ENCODE measurements at regions of chr1 and their contacts with region 1.

Region 1: GRCh38 chr1:228131766-228132165 is 8.3 kb upstream of the GUK1 start:
- DNase-seq: peak; percentile 52
- H3K4me3 Mint-ChIP-seq: peak overlapping the region; percentile 79
- H3K27ac Mint-ChIP-seq: peak overlapping the region; percentile 80
- H3K4me1 Mint-ChIP-seq: peaks cover 17% of the 10 kb centered on the region
- H3K27me3 Mint-ChIP-seq: no peaks in the 10 kb centered on the region
- CTCF ChIP-seq: no peak

Region 2: GRCh38 chr1:228031276-228031995 is 100.3 kb before region 1 on chr1:
- CTCF ChIA-PET with region 1: no interaction called
- intact Hi-C with region 1: no loop called
- DNase-seq: no peak
- H3K4me3 Mint-ChIP-seq: no peak overlapping the region
- H3K27ac Mint-ChIP-seq: no peak overlapping the region
- H3K4me1 Mint-ChIP-seq: no peaks in the 10 kb centered on the region
- H3K27me3 Mint-ChIP-seq: peaks cover 54% of the 10 kb centered on the region
- CTCF ChIP-seq: no peak

Region 3: GRCh38 chr1:228085287-228085951 is 46.3 kb before region 1 on chr1:
- CTCF ChIA-PET with region 1: interaction called, 5 read pairs
- intact Hi-C with region 1: loop called (anchors 1 kb)
- DNase-seq: no peak
- H3K4me3 Mint-ChIP-seq: peak overlapping the region; percentile 89
- H3K27ac Mint-ChIP-seq: peak overlapping the region; percentile 97
- H3K4me1 Mint-ChIP-seq: peaks cover 75% of the 10 kb centered on the region
- H3K27me3 Mint-ChIP-seq: no peaks in the 10 kb centered on the region
- CTCF ChIP-seq: no peak

Region 4: DNA sequence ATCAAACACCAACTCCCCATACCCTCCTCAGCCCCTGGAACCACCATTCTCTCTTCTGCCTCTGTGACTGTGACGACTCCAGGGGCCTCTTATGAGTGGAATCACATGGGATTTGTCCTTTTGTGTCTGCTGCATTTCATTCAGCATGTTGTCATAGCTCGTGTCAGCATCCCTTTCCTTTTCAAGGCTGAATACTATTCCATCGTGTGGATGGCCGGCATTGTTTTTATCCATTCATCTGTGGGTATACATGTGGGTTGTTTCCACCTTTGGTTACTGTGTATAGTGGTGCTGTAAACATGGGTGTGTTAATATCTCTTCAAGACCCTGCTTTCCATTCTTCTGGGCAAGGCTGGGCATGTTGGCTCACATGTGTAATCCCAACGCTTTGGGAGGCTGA is 59.0 kb after region 1 on chr1:
- CTCF ChIA-PET with region 1: no interaction called
- intact Hi-C with region 1: loop called (anchors 1 kb)
- DNase-seq: no peak
- H3K4me3 Mint-ChIP-seq: no peak overlapping the region
- H3K27ac Mint-ChIP-seq: no peak overlapping the region
- H3K4me1 Mint-ChIP-seq: no peaks in the 10 kb centered on the region
- H3K27me3 Mint-ChIP-seq: no peaks in the 10 kb centered on the region
- CTCF ChIP-seq: no peak

Region 5: DNA sequence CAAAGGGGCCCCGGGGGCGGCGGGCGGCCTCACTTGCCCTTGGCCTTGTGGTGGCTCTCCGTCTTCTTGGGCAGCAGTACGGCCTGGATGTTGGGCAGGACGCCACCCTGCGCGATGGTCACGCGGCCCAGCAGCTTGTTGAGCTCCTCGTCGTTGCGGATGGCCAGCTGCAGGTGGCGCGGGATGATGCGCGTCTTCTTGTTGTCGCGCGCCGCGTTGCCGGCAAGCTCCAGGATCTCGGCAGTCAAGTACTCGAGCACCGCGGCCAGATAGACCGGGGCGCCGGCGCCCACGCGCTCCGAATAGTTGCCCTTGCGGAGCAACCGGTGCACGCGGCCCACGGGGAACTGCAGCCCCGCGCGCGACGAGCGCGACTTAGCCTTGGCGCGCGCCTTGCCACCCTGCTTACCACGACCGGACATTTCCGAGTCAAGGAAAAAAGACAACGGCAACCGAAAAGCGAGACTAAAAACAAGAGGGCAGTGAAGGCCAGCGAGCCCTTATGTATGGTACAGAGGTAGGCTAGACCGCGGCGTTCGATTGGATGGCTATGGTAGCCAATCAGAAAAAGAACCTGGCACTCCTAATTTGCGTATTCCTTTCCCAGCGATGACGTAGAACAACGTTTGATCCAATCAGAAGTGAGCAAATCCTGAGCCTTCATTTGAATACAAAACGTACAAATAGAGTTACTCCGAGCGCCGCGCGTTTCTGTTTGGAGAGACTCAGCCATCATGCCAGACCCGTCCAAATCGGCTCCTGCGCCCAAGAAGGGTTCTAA is 325.8 kb after region 1 on chr1:
- CTCF ChIA-PET with region 1: no interaction called
- intact Hi-C with region 1: loop called (anchors 5 kb)
- DNase-seq: peak; percentile 92
- H3K4me3 Mint-ChIP-seq: peak overlapping the region; percentile 87
- H3K27ac Mint-ChIP-seq: peak overlapping the region; percentile 98
- H3K4me1 Mint-ChIP-seq: peaks cover 25% of the 10 kb centered on the region
- H3K27me3 Mint-ChIP-seq: peaks cover 24% of the 10 kb centered on the region
- CTCF ChIP-seq: peak; percentile 25

Region 6: DNA sequence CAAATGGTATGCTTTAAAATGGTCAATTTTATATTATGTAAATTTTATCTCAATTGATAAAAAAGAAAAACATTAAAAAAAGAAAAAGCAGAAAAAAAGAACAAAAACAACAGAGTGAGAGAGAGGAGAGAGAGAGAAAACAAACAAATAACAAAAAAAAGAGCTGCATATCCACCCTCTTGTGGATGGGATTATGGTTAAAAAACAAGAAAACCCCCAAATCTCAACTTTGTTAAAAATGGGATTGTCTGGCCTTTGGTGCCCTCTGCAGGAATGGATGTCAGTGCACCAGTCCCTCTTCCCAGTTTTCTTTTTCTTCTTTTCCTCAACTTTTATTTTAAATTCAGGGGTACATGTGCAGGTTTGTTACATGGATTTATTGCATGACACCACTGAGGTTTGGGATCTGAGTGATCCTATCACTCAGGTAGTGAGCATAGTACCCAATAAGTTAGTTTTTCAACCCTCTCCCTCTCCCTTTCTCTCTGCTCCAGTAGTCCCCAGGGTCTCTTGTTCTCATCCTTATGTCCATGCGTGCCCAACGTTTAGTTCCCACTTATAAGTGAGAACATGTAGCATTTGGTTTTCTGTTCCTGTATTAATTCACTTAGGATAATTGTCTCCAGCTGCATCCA is 383.6 kb after region 1 on chr1:
- CTCF ChIA-PET with region 1: interaction called, 3 read pairs
- intact Hi-C with region 1: loop called (anchors 2 kb)
- DNase-seq: peak; percentile 53
- H3K4me3 Mint-ChIP-seq: no peak overlapping the region
- H3K27ac Mint-ChIP-seq: no peak overlapping the region
- H3K4me1 Mint-ChIP-seq: no peaks in the 10 kb centered on the region
- H3K27me3 Mint-ChIP-seq: peaks cover 81% of the 10 kb centered on the region
- CTCF ChIP-seq: peak; percentile 75

Measured in Calu3 (cell line).